ENCODE measurements at regions of chr14 and their contacts with region 1.

Region 1: DNA sequence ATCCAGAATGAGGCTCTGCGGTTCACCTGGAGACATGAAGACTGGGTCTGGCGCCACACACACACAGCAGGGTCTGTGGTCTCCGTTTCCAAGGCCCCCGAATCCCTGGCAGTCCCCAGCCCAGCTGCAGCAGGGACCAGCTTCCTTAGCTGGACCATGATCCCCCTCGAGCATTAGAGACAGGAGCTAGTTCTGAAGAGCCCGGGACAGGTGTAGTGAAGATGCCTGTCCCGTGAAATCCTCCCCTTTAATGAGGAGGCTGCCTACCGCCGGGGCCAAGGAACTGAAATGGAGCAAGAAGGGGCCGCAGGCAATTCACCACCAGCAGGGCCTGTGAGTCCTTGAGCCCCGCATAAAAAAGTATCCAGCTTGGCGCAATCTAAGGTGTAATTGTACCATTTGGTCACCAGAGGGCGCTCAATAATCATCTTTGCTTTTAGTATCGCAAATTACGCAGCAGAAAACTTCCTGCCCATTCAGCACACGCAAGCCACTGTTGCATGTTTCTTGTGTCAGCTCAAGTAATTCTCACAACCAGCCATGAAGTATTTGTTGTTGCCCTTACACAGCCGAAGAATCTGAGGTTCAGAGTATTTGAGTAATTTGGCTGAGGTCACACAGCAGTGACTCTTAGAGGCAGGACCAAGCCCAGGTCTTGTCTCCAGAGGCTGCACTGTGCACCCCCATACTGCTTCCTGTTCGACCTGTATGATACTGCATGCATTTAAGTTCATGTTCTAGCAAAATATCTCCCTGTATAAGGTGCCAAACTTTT is 54.3 kb upstream of the PPP2R5C start:
- DNase-seq: peak in 13 of 14 experiments; percentile 39 to 93 (median 55)
- ATAC-seq: peak; percentile 64
- H3K4me3 ChIP-seq: peak overlapping the region; percentile 17
- H3K4me3 Mint-ChIP-seq: peak overlapping the region; percentile 30
- H3K27ac ChIP-seq: peak overlapping the region in 1 of 2 donors; percentile 62
- H3K27ac Mint-ChIP-seq: peak overlapping the region; percentile 77
- H3K4me1 ChIP-seq: peaks cover 52% of the 10 kb centered on the region
- H3K4me1 Mint-ChIP-seq: peaks cover 44% of the 10 kb centered on the region
- H3K27me3 ChIP-seq: no peaks in the 10 kb centered on the region
- H3K27me3 Mint-ChIP-seq: no peaks in the 10 kb centered on the region
- CTCF ChIP-seq: peak; percentile 87

Region 2: DNA sequence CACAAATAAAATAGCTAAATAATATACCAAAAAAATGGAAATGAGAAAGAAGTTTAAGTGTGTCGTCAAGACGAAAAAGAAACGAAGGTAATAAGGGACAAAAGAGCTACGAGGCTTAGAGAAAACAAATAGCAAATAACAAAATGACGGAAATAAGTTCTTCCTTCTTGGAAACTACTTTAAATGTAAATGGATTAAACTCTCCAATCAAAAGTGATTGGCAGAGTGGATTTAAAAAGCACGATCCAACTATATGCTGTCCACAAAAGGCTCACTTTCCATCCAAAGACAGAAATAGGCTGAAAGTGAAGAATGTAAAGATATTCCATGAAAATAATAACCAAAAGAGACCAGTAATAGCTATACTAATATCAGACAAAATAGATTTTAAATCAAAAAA is 63.6 kb before region 1 on chr14:
- CTCF ChIA-PET with region 1: no interaction called
- POLR2A ChIA-PET with region 1: no interaction called
- intact Hi-C with region 1: no loop called
- DNase-seq: no peak
- ATAC-seq: no peak
- H3K4me3 ChIP-seq: no peak overlapping the region
- H3K4me3 Mint-ChIP-seq: no peak overlapping the region
- H3K27ac ChIP-seq: no peak overlapping the region
- H3K27ac Mint-ChIP-seq: no peak overlapping the region
- H3K4me1 ChIP-seq: no peaks in the 10 kb centered on the region
- H3K4me1 Mint-ChIP-seq: no peaks in the 10 kb centered on the region
- H3K27me3 ChIP-seq: peaks cover 5% of the 10 kb centered on the region in 2 experiments
- H3K27me3 Mint-ChIP-seq: peaks cover 60% of the 10 kb centered on the region
- CTCF ChIP-seq: no peak

Region 3: DNA sequence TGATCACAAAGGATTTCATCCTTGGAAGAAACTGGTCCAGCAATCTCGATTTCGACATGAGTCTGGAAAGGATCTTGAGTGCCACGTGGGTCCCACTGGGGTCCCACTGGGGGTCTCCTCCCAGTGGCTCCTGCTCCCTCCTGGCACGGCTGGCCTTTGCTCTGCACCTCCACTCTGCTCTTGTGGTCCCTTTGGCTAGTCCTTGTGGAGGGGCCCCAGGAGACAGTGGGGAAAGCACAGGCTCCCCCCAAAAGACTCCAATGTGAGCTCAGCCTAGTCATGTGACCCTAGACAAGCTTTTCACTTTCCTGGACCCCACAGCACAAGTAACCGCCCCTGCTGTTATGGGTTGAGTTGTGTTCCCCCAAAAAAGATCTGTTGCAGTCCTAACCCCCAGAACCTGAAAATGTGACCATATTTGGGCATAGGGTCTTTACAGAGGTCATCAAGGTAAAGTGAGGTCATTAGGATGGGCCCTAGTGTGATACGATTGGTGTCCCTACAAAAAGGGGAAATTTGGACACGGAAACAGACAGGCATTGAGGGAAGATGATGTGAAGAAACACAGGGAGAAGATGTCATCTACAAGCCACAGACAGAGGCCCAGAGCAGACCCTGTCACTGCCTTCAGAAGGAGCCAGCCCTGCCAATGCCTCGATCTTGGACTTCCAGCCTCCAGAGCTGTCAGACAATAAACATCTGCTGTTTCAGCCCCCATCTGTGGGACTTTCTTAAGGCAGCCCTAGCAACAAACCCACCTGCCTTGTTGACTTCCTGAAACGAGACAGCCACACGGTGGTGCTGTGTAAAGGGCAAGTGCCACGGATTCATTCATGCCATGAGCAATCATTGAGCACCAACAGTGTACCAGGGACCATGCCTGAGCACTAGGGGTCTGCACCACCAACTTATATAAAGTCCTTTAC is 30.4 kb after region 1 on chr14:
- CTCF ChIA-PET with region 1: interaction called, 12 read pairs
- POLR2A ChIA-PET with region 1: interaction called, 5 read pairs
- intact Hi-C with region 1: loop called (anchors 2 kb)
- DNase-seq: peak in 10 of 14 experiments; percentile 17 to 65 (median 38)
- ATAC-seq: peak; percentile 65
- H3K4me3 ChIP-seq: no peak overlapping the region
- H3K4me3 Mint-ChIP-seq: no peak overlapping the region
- H3K27ac ChIP-seq: no peak overlapping the region
- H3K27ac Mint-ChIP-seq: peak overlapping the region; percentile 8
- H3K4me1 ChIP-seq: peaks cover 9% of the 10 kb centered on the region
- H3K4me1 Mint-ChIP-seq: peaks cover 7% of the 10 kb centered on the region
- H3K27me3 ChIP-seq: no peaks in the 10 kb centered on the region
- H3K27me3 Mint-ChIP-seq: no peaks in the 10 kb centered on the region
- CTCF ChIP-seq: peak; percentile 39

Region 4: DNA sequence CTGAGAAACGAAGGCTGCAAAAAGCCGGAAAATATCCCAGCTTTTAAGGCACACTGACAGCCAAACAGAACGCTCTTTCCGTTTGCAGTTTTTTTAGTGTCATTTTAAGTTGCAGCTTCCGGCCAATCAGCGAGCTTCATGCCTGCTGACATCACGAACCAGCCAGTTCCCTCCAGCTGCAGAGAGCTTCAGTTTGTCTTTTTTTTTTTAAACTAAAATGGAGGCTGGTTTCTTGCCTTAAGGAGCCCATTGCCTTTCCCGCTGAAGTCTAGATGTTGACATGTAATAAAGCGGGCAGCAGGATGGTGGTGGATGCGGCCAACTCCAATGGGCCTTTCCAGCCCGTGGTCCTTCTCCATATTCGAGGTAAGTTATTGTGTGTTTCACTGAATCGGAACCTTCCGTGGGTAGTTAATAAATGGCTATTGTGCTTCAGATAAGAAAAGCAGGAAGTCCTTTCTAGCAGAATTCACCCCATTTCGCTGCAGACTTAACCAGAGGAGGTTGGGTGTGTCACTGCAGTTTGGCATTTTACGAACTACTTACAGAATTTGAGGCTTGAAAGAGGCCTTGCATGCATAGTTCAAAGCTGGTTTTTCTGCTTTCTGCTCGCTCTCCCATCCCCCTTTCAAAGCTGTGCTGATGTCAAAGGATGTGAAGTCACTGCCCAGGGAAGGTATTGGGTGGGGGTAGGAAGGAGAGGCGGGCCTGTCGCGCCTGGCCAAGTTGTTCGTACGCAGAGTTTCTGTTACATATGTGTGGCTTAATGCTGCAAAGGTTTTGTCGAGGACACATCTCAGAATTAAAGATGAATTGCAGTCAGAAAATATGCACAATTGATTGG is 102.6 kb after region 1 on chr14:
- CTCF ChIA-PET with region 1: interaction called, 4 read pairs
- POLR2A ChIA-PET with region 1: interaction called, 48 read pairs
- intact Hi-C with region 1: no loop called
- DNase-seq: peak; percentile 73 to 97 (median 81)
- ATAC-seq: peak; percentile 84
- H3K4me3 ChIP-seq: peak overlapping the region; percentile 79
- H3K4me3 Mint-ChIP-seq: peak overlapping the region; percentile 94
- H3K27ac ChIP-seq: peak overlapping the region; percentile 99
- H3K27ac Mint-ChIP-seq: peak overlapping the region; percentile 98
- H3K4me1 ChIP-seq: peaks cover 39% of the 10 kb centered on the region
- H3K4me1 Mint-ChIP-seq: peaks cover 56% of the 10 kb centered on the region
- H3K27me3 ChIP-seq: no peaks in the 10 kb centered on the region
- H3K27me3 Mint-ChIP-seq: no peaks in the 10 kb centered on the region
- CTCF ChIP-seq: no peak

Region 5: GRCh38 chr14:101876555-101876938 is 169.3 kb after region 1 on chr14:
- CTCF ChIA-PET with region 1: interaction called, 3 read pairs
- POLR2A ChIA-PET with region 1: interaction called, 3 read pairs
- intact Hi-C with region 1: loop called in 1 of 2 experiments (anchors 1 kb)
- DNase-seq: peak; percentile 34 to 92 (median 64)
- ATAC-seq: peak; percentile 93
- H3K4me3 ChIP-seq: peak overlapping the region; percentile 27
- H3K4me3 Mint-ChIP-seq: peak overlapping the region; percentile 61
- H3K27ac ChIP-seq: peak overlapping the region; percentile 56 to 64
- H3K27ac Mint-ChIP-seq: peak overlapping the region; percentile 79
- H3K4me1 ChIP-seq: peaks cover 60% of the 10 kb centered on the region
- H3K4me1 Mint-ChIP-seq: peaks cover 78% of the 10 kb centered on the region
- H3K27me3 ChIP-seq: no peaks in the 10 kb centered on the region
- H3K27me3 Mint-ChIP-seq: no peaks in the 10 kb centered on the region
- CTCF ChIP-seq: no peak

Region 6: DNA sequence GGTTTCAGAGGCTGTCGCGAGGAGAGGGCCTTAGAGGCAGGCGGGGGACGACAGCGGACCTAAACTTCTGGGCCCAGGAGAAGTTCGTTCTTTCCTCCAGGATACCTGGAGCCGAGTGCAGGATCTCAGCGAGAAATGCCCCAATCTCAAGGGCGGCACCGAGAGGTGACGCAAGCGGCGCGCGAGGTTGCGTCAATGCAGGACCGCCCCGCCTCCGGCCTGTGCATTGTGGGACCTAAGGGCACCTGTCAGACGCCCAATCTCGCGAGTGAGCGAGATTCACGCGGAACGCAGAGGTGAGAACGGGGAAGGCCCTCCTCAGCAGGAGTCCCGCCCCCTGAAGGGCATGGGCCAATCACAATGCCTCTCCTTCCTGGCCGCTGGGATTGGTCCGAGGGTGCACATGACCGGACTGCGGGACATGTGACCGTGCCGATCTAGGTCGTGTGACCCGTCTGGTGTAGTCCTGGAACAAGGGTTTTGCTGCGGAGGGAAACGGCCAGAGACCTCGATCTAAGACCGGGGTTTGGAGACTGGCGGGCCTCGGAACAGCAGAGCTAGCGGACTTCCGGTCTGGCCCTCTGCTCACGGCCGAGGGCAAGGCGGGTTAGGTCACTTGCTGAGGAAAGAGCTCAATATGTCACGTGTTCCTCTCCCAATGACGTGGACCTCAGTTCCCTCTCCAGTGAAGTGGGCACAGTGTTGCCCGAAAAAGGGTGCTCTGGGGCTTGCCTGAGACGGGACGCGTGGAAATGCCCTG is 240.8 kb after region 1 on chr14:
- CTCF ChIA-PET with region 1: interaction called, 3 read pairs
- POLR2A ChIA-PET with region 1: interaction called, 13 read pairs
- intact Hi-C with region 1: loop called in 1 of 2 experiments (anchors 2 kb)
- DNase-seq: peak; percentile 98 to 100 (median 99)
- ATAC-seq: peak; percentile 96
- H3K4me3 ChIP-seq: peak overlapping the region; percentile 78
- H3K4me3 Mint-ChIP-seq: peak overlapping the region; percentile 94
- H3K27ac ChIP-seq: peak overlapping the region; percentile 87 to 93
- H3K27ac Mint-ChIP-seq: peak overlapping the region; percentile 99
- H3K4me1 ChIP-seq: peaks cover 23% of the 10 kb centered on the region
- H3K4me1 Mint-ChIP-seq: peaks cover 18% of the 10 kb centered on the region
- H3K27me3 ChIP-seq: peaks cover 8 to 22% of the 10 kb centered on the region in 2 experiments
- H3K27me3 Mint-ChIP-seq: peaks cover 31% of the 10 kb centered on the region
- CTCF ChIP-seq: no peak

Region 7: GRCh38 chr14:102139248-102140026 is 432.2 kb after region 1 on chr14 and contains the start of gene WDR20:
- CTCF ChIA-PET with region 1: no interaction called
- POLR2A ChIA-PET with region 1: no interaction called
- intact Hi-C with region 1: loop called in 1 of 2 experiments (anchors 5 kb)
- DNase-seq: peak; percentile 99 to 100 (median 99)
- ATAC-seq: peak; percentile 94
- H3K4me3 ChIP-seq: peak within 1 kb of the TSS; percentile 96
- H3K4me3 Mint-ChIP-seq: peak within 1 kb of the TSS; percentile 100
- H3K27ac ChIP-seq: peak within 1 kb of the TSS; percentile 77 to 88
- H3K27ac Mint-ChIP-seq: peak within 1 kb of the TSS; percentile 99
- H3K4me1 ChIP-seq: peaks cover 16% of the 10 kb centered on the region
- H3K4me1 Mint-ChIP-seq: peaks cover 30% of the 10 kb centered on the region
- H3K27me3 ChIP-seq: no peaks in the 10 kb centered on the region
- H3K27me3 Mint-ChIP-seq: no peaks in the 10 kb centered on the region
- CTCF ChIP-seq: no peak
- total RNA-seq, gene WDR20: 40.1 to 41.2 TPM

Measured in CD4-positive, alpha-beta T cell (primary cell).